ENCODE measurements at regions of chr14 and their contacts with region 1.

Region 1: DNA sequence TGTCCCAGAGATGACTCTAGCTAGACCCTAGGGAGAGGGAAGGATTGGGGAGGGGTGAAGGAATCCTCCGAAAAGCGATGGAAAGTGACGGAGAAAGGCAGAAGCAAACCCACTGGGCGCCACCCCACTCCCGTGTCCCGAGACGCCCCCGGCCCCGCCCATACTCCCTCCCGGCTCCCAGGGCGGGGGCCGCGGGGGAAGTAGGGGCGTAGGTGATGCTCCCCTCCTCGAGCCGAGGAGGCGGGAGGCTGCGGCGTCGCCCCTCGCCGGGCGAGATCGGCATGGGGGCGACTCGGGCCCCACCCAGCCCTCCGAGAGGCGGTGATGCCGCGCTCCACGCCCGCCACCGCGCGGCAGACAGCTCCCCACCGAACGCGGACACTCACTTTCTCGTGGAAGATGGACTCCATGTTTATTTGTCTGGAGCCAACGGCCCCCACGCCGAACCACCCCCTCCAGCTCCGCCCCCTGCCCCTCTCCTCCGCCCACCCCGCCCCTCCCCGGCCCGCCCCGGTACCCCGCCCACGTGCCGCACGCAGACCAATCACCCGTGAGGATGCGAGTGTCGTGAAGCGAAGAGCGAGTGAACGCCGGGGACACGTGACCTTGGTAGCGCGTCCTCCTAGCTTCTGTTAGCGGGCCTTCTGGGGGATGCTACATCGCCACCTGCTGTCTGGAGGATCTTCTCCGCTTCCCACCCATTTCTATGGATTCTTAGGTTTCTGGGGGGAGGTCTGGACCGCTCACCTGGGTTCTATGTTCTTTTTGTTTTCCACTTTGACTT is at the start of gene ATXN3:
- DNase-seq: peak; percentile 90
- H3K4me3 ChIP-seq: peak within 1 kb of the TSS; percentile 89
- CTCF ChIP-seq: peak; percentile 91

Region 2: DNA sequence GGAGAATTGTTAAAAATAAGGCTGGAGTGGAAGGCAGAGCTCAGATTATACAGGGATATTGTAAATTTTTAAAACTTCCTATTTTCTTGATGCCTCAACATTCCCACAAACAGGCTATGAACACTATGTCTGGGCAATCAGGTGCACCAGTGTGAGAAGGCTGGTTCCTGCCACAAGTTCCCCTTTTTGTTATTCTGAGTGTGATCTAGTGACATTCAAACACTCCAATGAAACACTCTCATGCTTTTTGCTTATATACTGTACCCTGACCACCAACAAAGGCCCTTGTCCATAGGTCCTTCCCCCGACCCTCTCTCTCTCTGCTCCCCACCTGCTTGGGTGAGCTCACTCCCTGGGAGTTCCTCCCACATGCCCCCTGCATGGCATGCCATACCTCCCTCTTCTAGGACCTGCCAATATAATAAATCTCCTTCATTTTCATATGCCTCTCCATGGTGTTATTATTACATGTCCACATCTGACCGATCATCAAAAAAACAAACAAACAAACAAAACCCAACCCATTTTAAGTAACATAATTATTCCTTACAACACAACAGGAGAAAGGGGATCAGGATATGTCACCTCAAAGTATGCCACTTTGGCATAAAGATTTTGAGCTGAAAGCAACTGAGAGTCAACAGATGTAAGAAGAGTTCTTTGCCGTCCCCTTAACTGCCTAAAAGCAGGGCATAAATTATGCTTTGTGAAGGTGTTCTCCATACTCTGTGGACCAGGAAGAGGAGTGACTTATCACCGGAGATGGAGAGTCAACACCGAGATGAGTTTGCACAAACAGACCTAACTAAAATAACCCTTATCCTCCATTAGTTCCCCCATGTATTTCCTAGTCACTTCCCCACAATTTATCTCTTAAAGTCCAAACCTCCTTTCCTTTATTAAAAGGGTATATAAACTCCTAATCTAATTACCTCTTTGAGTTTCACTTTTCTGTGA is 331.9 kb before region 1 on chr14:
- CTCF ChIA-PET with region 1: no interaction called
- POLR2A ChIA-PET with region 1: no interaction called
- DNase-seq: no peak
- H3K4me3 ChIP-seq: no peak overlapping the region
- CTCF ChIP-seq: no peak

Region 3: DNA sequence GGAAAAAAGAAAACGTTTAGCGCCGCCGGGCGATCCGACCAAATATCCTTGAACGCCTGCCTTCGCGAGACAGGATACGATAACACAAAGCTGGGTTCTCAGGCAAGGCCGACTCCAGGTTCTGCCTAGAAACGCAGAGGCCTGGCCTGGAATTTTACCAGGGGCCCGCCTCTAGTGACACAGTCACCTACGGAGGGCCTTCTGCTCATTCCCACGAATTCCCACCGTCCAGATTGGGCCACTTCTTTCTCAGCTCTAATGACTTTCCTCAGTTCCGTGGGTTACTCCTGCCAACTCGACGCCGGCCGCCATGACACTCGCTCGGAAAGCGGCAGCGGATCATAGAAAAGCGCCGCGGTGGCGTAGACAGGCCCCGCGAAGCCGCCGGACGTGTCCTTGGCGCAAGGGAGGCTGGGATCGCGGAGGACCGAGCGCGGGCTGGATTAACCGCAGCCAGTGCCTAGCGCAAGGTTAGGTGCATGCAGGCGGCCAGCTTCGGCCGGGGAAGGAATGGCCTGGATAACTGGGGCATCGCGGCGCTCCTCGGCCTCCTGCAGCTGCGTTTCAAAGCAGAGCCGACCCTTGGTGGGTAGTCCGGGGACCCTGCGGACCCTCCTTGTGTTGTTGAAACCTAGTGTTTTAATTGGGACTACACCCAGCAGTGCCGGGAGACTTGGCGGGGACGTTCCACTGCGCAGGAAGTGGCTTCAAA is 66.5 kb before region 1 on chr14 and contains the start of gene TRIP11:
- CTCF ChIA-PET with region 1: interaction called, 8 read pairs
- POLR2A ChIA-PET with region 1: interaction called, 14 read pairs
- DNase-seq: peak; percentile 62
- H3K4me3 ChIP-seq: peak within 1 kb of the TSS; percentile 91
- CTCF ChIP-seq: no peak

Region 4: GRCh38 chr14:92057976-92058917 is 48.1 kb before region 1 on chr14:
- CTCF ChIA-PET with region 1: interaction called, 10 read pairs
- POLR2A ChIA-PET with region 1: no interaction called
- DNase-seq: no peak
- H3K4me3 ChIP-seq: no peak overlapping the region
- CTCF ChIP-seq: no peak

Region 5: DNA sequence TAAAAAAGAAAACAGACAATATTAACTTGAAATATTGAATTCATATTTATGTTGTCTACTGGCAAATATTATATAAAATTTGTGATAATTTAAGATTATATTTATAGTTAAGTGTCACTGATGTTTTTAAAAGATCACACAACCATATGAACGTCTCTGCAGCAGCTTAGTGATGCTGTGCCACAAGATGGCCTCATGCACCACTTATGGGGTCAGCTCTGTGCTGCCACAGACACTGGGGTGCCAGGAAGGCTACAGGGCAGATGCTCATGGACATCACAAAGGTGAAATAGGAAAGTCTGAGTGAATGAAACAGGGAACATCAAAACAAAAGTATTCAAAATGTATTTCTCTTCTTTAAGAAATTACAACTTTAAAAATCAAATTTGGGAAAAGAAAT is 13.0 kb before region 1 on chr14:
- CTCF ChIA-PET with region 1: interaction called, 23 read pairs
- POLR2A ChIA-PET with region 1: no interaction called
- DNase-seq: no peak
- H3K4me3 ChIP-seq: no peak overlapping the region
- CTCF ChIP-seq: no peak

Region 6: DNA sequence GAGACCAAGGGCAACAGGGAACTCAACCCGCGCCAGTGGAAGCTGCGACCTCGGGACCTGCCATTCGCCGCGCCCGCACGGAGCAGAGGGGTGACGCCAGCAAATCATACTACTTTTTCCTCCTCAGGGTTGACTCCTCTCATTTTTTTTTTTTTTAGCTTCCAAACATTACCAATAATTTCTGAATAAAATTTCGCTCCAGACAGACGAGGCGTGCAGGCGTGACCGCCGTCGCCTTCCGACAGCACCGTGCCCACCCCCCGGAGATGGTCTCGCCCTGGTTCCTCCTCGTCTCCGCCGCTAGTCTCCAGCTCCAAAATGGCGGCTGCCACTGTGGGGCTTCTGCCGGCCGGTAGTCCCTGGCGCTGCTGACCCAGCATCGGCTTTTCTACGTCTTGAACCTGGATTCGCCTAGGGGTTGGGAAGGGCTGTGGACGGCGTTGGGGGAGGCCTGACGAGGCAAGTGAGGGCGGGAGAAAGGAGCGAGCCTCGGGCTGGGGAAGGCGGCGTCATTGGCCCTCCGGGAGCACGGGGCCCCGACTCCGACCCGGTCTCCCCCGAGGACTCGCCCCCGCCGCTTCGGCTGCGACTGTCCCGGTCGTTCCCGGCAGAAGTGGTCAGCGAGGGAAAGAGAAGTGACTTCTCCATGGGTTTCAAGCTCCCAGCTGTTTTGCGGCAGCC is 15.5 kb after region 1 on chr14 and contains the starts of genes CPSF2 and NDUFB1:
- CTCF ChIA-PET with region 1: interaction called, 164 read pairs
- POLR2A ChIA-PET with region 1: interaction called, 14 read pairs
- DNase-seq: no peak
- H3K4me3 ChIP-seq: peak within 1 kb of the TSS; percentile 98
- CTCF ChIP-seq: no peak

Region 7: GRCh38 chr14:92135267-92135666 is 28.9 kb after region 1 on chr14:
- CTCF ChIA-PET with region 1: interaction called, 10 read pairs
- POLR2A ChIA-PET with region 1: interaction called, 3 read pairs
- DNase-seq: no peak
- H3K4me3 ChIP-seq: no peak overlapping the region
- CTCF ChIP-seq: peak; percentile 33

Measured in AG04449 (cell line).